PC-9 (cell line): ENCODE measurements at regions of chr14 and their contacts with region 1.

Region 1: GRCh38 chr14:99563233-99564129 is 40.5 kb downstream of the CCDC85C start:
- DNase-seq: peak; percentile 73 to 78
- H3K4me3 ChIP-seq: no peak overlapping the region
- H3K27ac ChIP-seq: no peak overlapping the region
- H3K4me1 ChIP-seq: peaks cover 42% of the 10 kb centered on the region
- H3K27me3 ChIP-seq: no peaks in the 10 kb centered on the region
- CTCF ChIP-seq: peak; percentile 62

Region 2: DNA sequence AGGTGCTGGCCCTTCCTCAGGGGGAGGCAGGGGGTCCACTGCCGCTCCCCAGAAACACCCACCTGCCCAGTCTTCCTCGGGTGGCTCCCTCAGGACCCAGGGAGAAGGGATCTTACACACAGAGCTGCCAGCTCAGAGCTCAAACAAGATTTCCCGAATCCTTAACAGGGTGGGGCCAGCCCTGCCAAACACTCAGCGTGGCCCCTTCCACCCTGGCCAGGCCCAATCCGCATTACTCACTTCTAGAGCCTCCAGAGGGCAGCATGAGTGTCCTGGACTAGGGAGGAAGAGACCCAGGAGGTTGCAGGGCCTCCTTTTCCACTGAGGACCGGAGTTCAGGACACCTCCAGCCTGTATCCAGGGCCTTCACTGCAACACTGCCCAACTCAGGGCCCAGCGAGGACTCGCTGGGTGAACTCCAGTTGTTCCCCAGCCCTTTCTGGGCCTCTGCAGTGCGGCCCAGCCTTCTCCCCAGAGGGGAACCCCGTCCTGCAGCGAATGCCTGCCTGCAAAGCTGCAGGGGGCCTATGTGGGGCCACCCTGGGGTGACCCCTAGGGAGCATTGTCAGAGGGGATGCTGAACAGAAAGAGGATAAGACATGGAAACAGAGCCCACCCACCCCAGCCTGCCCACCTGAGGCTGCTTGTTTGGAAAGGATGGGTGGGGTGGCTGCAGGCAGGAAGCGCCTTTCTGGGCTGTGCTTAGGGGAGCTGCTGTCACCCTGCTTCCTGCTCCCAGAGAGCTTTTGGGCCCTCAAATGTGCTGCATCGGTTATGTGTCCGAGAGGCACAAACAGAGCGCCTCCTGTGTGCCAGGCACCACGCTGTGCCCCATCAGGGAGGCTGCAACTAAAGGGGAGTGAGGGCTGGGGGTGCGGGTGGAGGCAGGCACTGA is 38.4 kb before region 1 on chr14:
- CTCF ChIA-PET with region 1: no interaction called
- POLR2A ChIA-PET with region 1: no interaction called
- intact Hi-C with region 1: loop called (anchors 5 kb)
- DNase-seq: no peak
- H3K4me3 ChIP-seq: no peak overlapping the region
- H3K27ac ChIP-seq: no peak overlapping the region
- H3K4me1 ChIP-seq: no peaks in the 10 kb centered on the region
- H3K27me3 ChIP-seq: no peaks in the 10 kb centered on the region
- CTCF ChIP-seq: no peak

Region 3: GRCh38 chr14:99575043-99576023 is 11.9 kb after region 1 on chr14:
- CTCF ChIA-PET with region 1: no interaction called
- POLR2A ChIA-PET with region 1: interaction called, 4 read pairs
- intact Hi-C with region 1: loop called (anchors 1 kb)
- DNase-seq: peak; percentile 76 to 79
- H3K4me3 ChIP-seq: no peak overlapping the region; the same call in 1 of the 2 replicates
- H3K27ac ChIP-seq: peak overlapping the region; percentile 57
- H3K4me1 ChIP-seq: peaks cover 59% of the 10 kb centered on the region
- H3K27me3 ChIP-seq: no peaks in the 10 kb centered on the region
- CTCF ChIP-seq: no peak

Region 4: DNA sequence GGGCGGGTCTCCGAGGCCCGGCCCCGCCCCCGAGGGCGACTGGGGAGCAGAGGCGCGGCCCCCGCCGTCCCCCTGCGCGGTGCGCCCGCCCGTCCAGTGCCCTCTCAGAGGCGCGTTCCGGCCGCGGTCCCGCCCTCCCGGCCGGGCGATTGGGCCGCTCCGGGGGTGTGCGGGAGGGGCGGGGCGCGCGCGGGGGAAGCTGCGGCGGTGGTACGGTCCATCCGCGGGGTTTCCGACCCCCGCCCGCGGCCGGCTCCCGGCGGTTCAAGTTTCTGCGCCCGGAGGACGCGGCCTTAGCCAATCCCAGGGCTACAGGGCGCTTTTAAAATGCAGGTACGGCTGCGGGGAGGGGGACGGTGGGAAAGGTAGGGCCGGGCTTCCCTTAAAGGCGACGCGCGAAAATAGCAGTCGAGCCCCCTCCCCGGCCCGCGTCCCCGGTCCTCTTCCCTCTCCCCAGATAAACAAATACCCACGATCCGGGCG is 40.8 kb after region 1 on chr14:
- CTCF ChIA-PET with region 1: no interaction called
- POLR2A ChIA-PET with region 1: no interaction called
- intact Hi-C with region 1: loop called (anchors 1 kb)
- DNase-seq: peak; percentile 72 to 87
- H3K4me3 ChIP-seq: peak overlapping the region; percentile 71
- H3K27ac ChIP-seq: peak overlapping the region; percentile 50
- H3K4me1 ChIP-seq: peaks cover 16% of the 10 kb centered on the region
- H3K27me3 ChIP-seq: no peaks in the 10 kb centered on the region
- CTCF ChIP-seq: no peak

Region 5: GRCh38 chr14:99628832-99629618 is 65.5 kb after region 1 on chr14:
- CTCF ChIA-PET with region 1: no interaction called
- POLR2A ChIA-PET with region 1: no interaction called
- intact Hi-C with region 1: loop called (anchors 2 kb)
- DNase-seq: peak; percentile 47 to 55
- H3K4me3 ChIP-seq: no peak overlapping the region
- H3K27ac ChIP-seq: no peak overlapping the region
- H3K4me1 ChIP-seq: no peaks in the 10 kb centered on the region
- H3K27me3 ChIP-seq: no peaks in the 10 kb centered on the region
- CTCF ChIP-seq: peak; percentile 92

Region 6: GRCh38 chr14:99654235-99654966 is 90.9 kb after region 1 on chr14:
- CTCF ChIA-PET with region 1: no interaction called
- POLR2A ChIA-PET with region 1: no interaction called
- intact Hi-C with region 1: no loop called
- DNase-seq: peak in 1 of 2 experiments; percentile 2
- H3K4me3 ChIP-seq: no peak overlapping the region
- H3K27ac ChIP-seq: no peak overlapping the region
- H3K4me1 ChIP-seq: no peaks in the 10 kb centered on the region
- H3K27me3 ChIP-seq: 0 out of 2 replicates have a peak, but pooled peaks cover 3% of the 10 kb centered on the region
- CTCF ChIP-seq: no peak

Region 7: GRCh38 chr14:99706107-99706900 is 142.8 kb after region 1 on chr14:
- CTCF ChIA-PET with region 1: no interaction called
- POLR2A ChIA-PET with region 1: no interaction called
- intact Hi-C with region 1: no loop called
- DNase-seq: no peak
- H3K4me3 ChIP-seq: no peak overlapping the region
- H3K27ac ChIP-seq: no peak overlapping the region
- H3K4me1 ChIP-seq: no peaks in the 10 kb centered on the region
- H3K27me3 ChIP-seq: peaks cover 10% of the 10 kb centered on the region
- CTCF ChIP-seq: no peak

Region 8: GRCh38 chr14:99853206-99853605 is 289.7 kb after region 1 on chr14:
- CTCF ChIA-PET with region 1: no interaction called
- POLR2A ChIA-PET with region 1: no interaction called
- intact Hi-C with region 1: no loop called
- DNase-seq: no peak
- H3K4me3 ChIP-seq: no peak overlapping the region
- H3K27ac ChIP-seq: no peak overlapping the region
- H3K4me1 ChIP-seq: no peaks in the 10 kb centered on the region
- H3K27me3 ChIP-seq: no peaks in the 10 kb centered on the region
- CTCF ChIP-seq: no peak